ENCODE measurements at regions of chr1 and their contacts with region 1.

Region 1: DNA sequence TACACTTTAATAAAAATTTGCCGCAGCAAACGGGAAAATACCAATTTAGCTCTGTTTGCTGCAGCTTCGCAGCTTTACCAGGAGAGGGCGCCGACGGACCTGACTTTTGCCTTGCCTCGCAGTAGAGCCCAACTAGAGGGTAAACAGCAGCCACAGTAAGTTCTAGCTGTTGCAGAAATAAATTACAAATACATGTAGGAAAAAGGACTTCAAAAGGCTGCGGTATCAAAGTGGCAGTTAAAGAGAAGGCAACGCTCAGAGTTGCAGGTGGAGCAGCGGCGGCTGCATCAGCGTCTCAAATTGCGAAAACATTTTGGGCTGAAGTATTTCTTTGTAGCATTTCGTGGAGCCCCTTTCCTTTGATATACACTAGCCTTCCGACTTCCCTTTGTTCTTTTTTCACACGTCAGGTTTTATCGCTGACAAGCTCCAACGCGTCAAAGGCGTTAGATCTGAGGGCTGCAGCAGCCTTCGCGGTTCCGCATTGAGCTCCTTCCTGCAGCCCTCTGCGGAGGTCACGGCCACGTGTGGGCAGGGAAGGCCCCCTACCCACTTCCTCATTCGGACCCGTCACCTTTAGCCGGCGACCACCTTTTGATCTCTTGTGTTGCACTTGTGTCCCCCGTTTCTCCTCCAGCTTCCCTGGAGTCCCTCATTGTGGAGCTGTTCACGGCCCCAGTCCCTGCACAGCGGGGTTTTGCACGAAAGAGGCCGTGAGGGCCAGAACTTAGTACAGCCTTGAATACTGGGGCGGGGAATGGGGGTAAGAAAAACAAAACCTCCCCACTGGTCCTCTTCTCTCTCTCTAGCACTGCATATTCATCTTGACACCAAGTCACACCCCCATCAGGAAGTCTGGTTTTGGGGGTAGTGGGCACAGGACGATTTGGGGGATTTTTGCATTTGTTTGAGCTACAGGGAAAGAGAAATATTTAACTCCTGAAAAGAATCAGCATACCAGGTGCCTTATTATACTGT is 72.8 kb downstream of the S1PR1 start:
- DNase-seq: peak; percentile 87
- ATAC-seq: peak; percentile 75
- H3K4me3 ChIP-seq: peak overlapping the region; percentile 23 to 60 (median 43)
- H3K4me3 Mint-ChIP-seq: peak overlapping the region; percentile 86
- H3K27ac ChIP-seq: peak overlapping the region; percentile 86 to 97
- H3K27ac Mint-ChIP-seq: peak overlapping the region; percentile 91
- H3K4me1 ChIP-seq: peaks cover 58 to 67% of the 10 kb centered on the region in 2 donors
- H3K4me1 Mint-ChIP-seq: peaks cover 75% of the 10 kb centered on the region
- H3K27me3 ChIP-seq: no peaks in the 10 kb centered on the region
- H3K27me3 Mint-ChIP-seq: no peaks in the 10 kb centered on the region
- CTCF ChIP-seq: peak; percentile 78

Region 2: DNA sequence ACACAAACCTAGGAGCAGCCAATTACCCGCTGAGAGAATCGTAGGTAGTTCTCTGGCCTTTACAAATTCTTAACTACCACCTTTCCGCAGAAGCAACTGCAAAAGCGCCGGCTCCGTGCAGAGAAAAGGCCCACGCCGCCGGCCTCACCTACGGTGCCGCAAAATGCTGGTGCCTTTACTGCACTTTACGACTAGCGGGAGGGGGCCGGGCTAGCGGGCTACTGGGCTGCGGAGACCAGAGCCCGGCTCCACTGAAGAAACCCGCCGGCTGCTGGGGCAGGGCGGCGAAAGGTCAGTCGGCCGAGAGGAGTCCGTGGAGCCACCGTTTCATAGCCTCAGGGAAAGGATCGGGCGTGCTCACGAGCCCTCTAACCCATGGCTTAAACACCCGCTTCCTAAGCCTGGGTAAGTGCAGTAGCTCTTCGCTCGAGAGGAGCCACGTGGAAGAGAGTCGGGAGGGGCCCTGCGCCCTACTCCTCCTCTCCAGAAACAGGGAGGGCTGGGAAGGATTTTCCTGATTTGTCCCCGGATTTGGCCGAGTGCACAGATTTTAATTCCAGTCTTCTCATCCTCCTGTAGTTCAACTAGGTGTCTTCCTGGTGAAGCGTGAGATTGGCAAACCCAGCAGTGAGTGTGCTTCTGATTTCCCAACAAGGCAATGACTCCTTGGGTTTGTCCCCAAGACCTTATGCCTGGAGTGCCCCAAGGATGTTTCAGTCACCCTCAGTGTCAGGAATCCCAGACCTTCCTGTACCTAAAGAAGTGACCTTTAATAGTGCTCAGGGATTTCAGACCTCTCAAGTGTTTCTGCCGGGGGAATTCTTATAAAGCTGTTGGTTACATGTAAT is 283.7 kb before region 1 on chr1 and contains the start of gene DPH5:
- CTCF ChIA-PET with region 1: interaction called, 4 read pairs
- POLR2A ChIA-PET with region 1: no interaction called
- intact Hi-C with region 1: loop called (anchors 5 kb)
- DNase-seq: peak; percentile 90
- ATAC-seq: peak; percentile 96
- H3K4me3 ChIP-seq: peak within 1 kb of the TSS; percentile 81 to 97 (median 92)
- H3K4me3 Mint-ChIP-seq: peak within 1 kb of the TSS; percentile 98
- H3K27ac ChIP-seq: peak within 1 kb of the TSS; percentile 78 to 85
- H3K27ac Mint-ChIP-seq: peak within 1 kb of the TSS; percentile 97
- H3K4me1 ChIP-seq: peaks cover 45 to 47% of the 10 kb centered on the region in 2 donors
- H3K4me1 Mint-ChIP-seq: peaks cover 50% of the 10 kb centered on the region
- H3K27me3 ChIP-seq: no peaks in the 10 kb centered on the region
- H3K27me3 Mint-ChIP-seq: no peaks in the 10 kb centered on the region
- CTCF ChIP-seq: no peak
- total RNA-seq, gene DPH5: 39.4 and 42.5 TPM in 2 replicates

Region 3: GRCh38 chr1:101293461-101294051 is 16.1 kb before region 1 on chr1:
- CTCF ChIA-PET with region 1: interaction called, 25 read pairs
- POLR2A ChIA-PET with region 1: no interaction called
- intact Hi-C with region 1: no loop called
- DNase-seq: peak; percentile 58
- ATAC-seq: peak; percentile 62
- H3K4me3 ChIP-seq: no peak overlapping the region
- H3K4me3 Mint-ChIP-seq: peak overlapping the region; percentile 29
- H3K27ac ChIP-seq: no peak overlapping the region
- H3K27ac Mint-ChIP-seq: peak overlapping the region; percentile 70
- H3K4me1 ChIP-seq: peaks cover 23 to 34% of the 10 kb centered on the region in 2 donors
- H3K4me1 Mint-ChIP-seq: peaks cover 33% of the 10 kb centered on the region
- H3K27me3 ChIP-seq: no peaks in the 10 kb centered on the region
- H3K27me3 Mint-ChIP-seq: no peaks in the 10 kb centered on the region
- CTCF ChIP-seq: no peak

Region 4: DNA sequence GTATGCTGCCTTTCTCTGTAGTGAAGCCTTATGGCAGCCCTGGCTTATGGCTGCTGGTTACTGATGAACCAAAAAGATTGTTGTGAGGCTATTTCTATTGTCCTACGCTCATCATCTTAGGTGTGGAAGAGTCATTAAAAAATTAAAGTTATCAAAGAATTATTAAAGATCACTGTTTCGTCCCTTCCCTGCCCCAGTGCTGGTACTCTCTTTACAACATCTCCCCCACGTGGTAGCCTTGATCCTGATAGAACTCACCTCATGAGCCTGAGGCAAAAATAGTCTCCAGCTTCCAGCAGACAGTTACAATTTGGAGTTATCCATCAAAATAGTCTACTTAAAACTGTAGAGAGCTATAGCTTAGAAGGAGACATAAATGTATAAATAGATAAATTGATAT is 128.7 kb after region 1 on chr1:
- CTCF ChIA-PET with region 1: interaction called, 60 read pairs
- POLR2A ChIA-PET with region 1: interaction called, 5 read pairs
- intact Hi-C with region 1: loop called (anchors 1 kb)
- DNase-seq: peak; percentile 39
- ATAC-seq: peak; percentile 29
- H3K4me3 ChIP-seq: no peak overlapping the region
- H3K4me3 Mint-ChIP-seq: no peak overlapping the region
- H3K27ac ChIP-seq: no peak overlapping the region
- H3K27ac Mint-ChIP-seq: no peak overlapping the region
- H3K4me1 ChIP-seq: peaks cover 33 to 34% of the 10 kb centered on the region in 2 donors
- H3K4me1 Mint-ChIP-seq: peaks cover 27% of the 10 kb centered on the region
- H3K27me3 ChIP-seq: no peaks in the 10 kb centered on the region
- H3K27me3 Mint-ChIP-seq: no peaks in the 10 kb centered on the region
- CTCF ChIP-seq: peak; percentile 19

Region 5: GRCh38 chr1:101567582-101568189 is 258.1 kb after region 1 on chr1:
- CTCF ChIA-PET with region 1: no interaction called
- POLR2A ChIA-PET with region 1: no interaction called
- intact Hi-C with region 1: loop called (anchors 5 kb)
- DNase-seq: peak; percentile 55
- ATAC-seq: peak; percentile 73
- H3K4me3 ChIP-seq: no peak overlapping the region
- H3K4me3 Mint-ChIP-seq: no peak overlapping the region
- H3K27ac ChIP-seq: no peak overlapping the region
- H3K27ac Mint-ChIP-seq: no peak overlapping the region
- H3K4me1 ChIP-seq: no peaks in the 10 kb centered on the region
- H3K4me1 Mint-ChIP-seq: no peaks in the 10 kb centered on the region
- H3K27me3 ChIP-seq: peaks cover 0 to 2% (median 0%) of the 10 kb centered on the region in 4 experiments
- H3K27me3 Mint-ChIP-seq: peaks cover 22% of the 10 kb centered on the region
- CTCF ChIP-seq: peak; percentile 98

Measured in B cell (primary cell).